GM12878 (cell line): ENCODE measurements at regions of chr14 and their contacts with region 1.

Region 1: DNA sequence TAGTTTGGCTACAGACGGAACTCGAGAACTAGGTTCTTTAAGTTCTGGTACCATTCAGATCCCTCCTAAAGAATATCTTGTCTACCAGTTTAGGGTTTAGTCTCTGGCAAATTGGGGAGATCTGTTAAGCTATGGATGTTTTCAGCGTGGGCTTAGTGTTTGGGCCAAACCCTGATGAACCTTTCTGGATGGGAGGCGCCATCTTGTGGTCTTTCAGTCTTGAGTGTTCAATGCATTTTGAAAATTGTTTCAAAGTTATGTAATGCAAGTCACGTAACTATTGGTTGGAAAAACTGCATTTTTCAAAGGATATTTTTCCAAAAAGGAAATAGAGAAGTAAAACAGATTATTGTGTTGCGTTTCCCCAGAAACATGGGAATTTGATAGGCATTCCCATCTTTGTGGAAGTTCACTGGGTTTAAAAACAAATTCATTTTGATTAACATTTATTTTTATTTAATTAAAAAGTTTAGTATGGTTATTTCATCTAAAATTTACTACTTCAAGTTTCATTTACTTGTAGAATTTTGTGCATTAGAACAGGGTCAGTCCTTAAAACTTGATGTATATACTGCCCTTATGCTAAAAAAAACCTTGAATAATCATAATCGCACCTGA is 169.0 kb downstream of the PRIMA1 start:
- DNase-seq: peak; percentile 5
- ATAC-seq: peak; percentile 81
- H3K4me3 ChIP-seq: no peak overlapping the region
- H3K27ac ChIP-seq: no peak overlapping the region
- H3K4me1 ChIP-seq: no peaks in the 10 kb centered on the region
- H3K27me3 ChIP-seq: peaks cover 0 to 3% of the 10 kb centered on the region in 2 experiments; a peak in 2 of 4 replicates
- CTCF ChIP-seq: peak; percentile 61 to 80 (median 67)
- EP300 ChIP-seq: no peak
- POLR2A ChIP-seq: no peak
- RAD21 ChIP-seq: peak; percentile 83

Region 2: DNA sequence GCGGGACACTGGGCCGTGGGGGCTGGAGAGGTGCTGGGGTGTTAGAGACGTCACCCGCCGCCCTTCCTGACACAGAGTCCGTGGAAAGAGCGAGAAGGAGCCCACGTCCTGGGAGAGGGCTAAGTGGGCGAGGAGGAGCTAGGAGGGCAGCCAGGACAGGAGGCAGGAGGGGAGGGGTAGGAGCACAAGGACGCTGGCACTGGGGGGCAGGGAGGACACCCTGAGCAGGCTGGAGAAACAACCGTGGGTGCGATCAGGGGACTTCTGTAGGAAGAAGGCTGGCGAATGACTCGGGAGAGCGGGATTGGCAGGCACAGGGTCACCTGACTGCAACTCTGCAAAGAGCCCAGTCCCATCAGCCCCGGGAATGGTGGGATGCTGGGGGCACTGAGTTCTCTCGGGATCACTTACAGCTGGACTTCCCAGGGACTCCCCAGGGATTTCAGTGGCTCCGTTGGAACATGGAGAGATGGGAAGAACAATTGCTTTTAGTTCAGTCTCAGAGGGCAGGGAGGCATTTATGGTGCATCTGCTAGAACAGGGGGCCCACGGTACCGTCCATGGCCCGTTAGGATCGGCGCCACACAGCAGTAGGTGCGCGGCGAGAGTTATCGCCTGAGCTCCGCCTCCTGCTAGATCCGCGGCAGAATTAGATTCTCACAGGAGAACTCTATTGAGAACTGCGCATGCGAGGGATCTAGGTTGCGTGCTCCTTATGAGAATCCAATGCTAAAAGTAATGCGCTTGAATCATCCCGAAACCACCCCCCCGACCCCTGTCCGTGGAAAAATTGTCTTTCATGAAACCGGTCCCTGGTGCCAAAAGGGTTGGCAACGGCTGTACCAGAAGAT is 387.9 kb before region 1 on chr14:
- CTCF ChIA-PET with region 1: interaction called, 11 read pairs
- POLR2A ChIA-PET with region 1: no interaction called
- RAD21 ChIA-PET with region 1: interaction called, 3 read pairs
- SMC1A ChIA-PET with region 1: interaction called, 11 read pairs
- in situ Hi-C with region 1: no loop called
- intact Hi-C with region 1: loop called (anchors 2 kb)
- DNase-seq: no peak
- ATAC-seq: no peak
- H3K4me3 ChIP-seq: no peak overlapping the region; the same call in 1 of the 2 replicates
- H3K27ac ChIP-seq: no peak overlapping the region
- H3K4me1 ChIP-seq: no peaks in the 10 kb centered on the region; the same call in 1 of the 2 replicates
- H3K27me3 ChIP-seq: no peaks in the 10 kb centered on the region
- CTCF ChIP-seq: no peak
- EP300 ChIP-seq: no peak
- POLR2A ChIP-seq: no peak
- RAD21 ChIP-seq: no peak

Region 3: GRCh38 chr14:93675651-93676050 is 56.4 kb after region 1 on chr14:
- CTCF ChIA-PET with region 1: no interaction called
- POLR2A ChIA-PET with region 1: no interaction called
- RAD21 ChIA-PET with region 1: no interaction called
- SMC1A ChIA-PET with region 1: no interaction called
- in situ Hi-C with region 1: no loop called
- intact Hi-C with region 1: no loop called
- DNase-seq: no peak
- ATAC-seq: no peak
- H3K4me3 ChIP-seq: no peak overlapping the region
- H3K27ac ChIP-seq: no peak overlapping the region
- H3K4me1 ChIP-seq: no peaks in the 10 kb centered on the region
- H3K27me3 ChIP-seq: no peaks in the 10 kb centered on the region; a peak in 2 of 4 replicates
- CTCF ChIP-seq: no peak
- EP300 ChIP-seq: no peak
- POLR2A ChIP-seq: no peak
- RAD21 ChIP-seq: no peak